Natural killer cell (primary cell): ENCODE measurements at regions of chr16 and their contacts with region 1.

Region 1: GRCh38 chr16:17026600-17027242 is 444.0 kb downstream of the XYLT1 start:
- DNase-seq: peak; percentile 47 to 64
- ATAC-seq: peak; percentile 67 to 88 (median 78)
- H3K4me3 ChIP-seq: no peak overlapping the region
- H3K4me3 Mint-ChIP-seq: peak overlapping the region; percentile 81
- H3K27ac ChIP-seq: peak overlapping the region; percentile 56
- H3K27ac Mint-ChIP-seq: peak overlapping the region; percentile 75 to 76
- H3K4me1 ChIP-seq: peaks cover 21% of the 10 kb centered on the region
- H3K4me1 Mint-ChIP-seq: peaks cover 41% of the 10 kb centered on the region in 2 donors
- H3K27me3 ChIP-seq: no peaks in the 10 kb centered on the region
- H3K27me3 Mint-ChIP-seq: peaks cover 0 to 17% of the 10 kb centered on the region in 2 donors
- CTCF ChIP-seq: no peak

Region 2: GRCh38 chr16:16982614-16983013 is 44.1 kb before region 1 on chr16:
- intact Hi-C with region 1: no loop called
- DNase-seq: no peak
- ATAC-seq: no peak
- H3K4me3 ChIP-seq: no peak overlapping the region
- H3K4me3 Mint-ChIP-seq: no peak overlapping the region
- H3K27ac ChIP-seq: no peak overlapping the region
- H3K27ac Mint-ChIP-seq: no peak overlapping the region
- H3K4me1 ChIP-seq: no peaks in the 10 kb centered on the region
- H3K4me1 Mint-ChIP-seq: peaks cover 18 to 23% of the 10 kb centered on the region in 2 donors
- H3K27me3 ChIP-seq: no peaks in the 10 kb centered on the region
- H3K27me3 Mint-ChIP-seq: no peaks in the 10 kb centered on the region
- CTCF ChIP-seq: no peak

Region 3: GRCh38 chr16:17013038-17013437 is 13.7 kb before region 1 on chr16:
- intact Hi-C with region 1: loop called (anchors 1 kb)
- DNase-seq: no peak
- ATAC-seq: no peak
- H3K4me3 ChIP-seq: no peak overlapping the region
- H3K4me3 Mint-ChIP-seq: peak overlapping the region; percentile 82
- H3K27ac ChIP-seq: peak overlapping the region; percentile 87
- H3K27ac Mint-ChIP-seq: peak overlapping the region; percentile 92 to 96
- H3K4me1 ChIP-seq: peaks cover 17% of the 10 kb centered on the region
- H3K4me1 Mint-ChIP-seq: peaks cover 11 to 16% of the 10 kb centered on the region in 2 donors
- H3K27me3 ChIP-seq: no peaks in the 10 kb centered on the region
- H3K27me3 Mint-ChIP-seq: no peaks in the 10 kb centered on the region
- CTCF ChIP-seq: no peak

Region 4: GRCh38 chr16:17070882-17071592 is 44.3 kb after region 1 on chr16:
- intact Hi-C with region 1: loop called (anchors 2 kb)
- DNase-seq: peak; percentile 57 to 96
- ATAC-seq: peak; percentile 71 to 92 (median 84)
- H3K4me3 ChIP-seq: peak overlapping the region; percentile 17
- H3K4me3 Mint-ChIP-seq: peak overlapping the region; percentile 88
- H3K27ac ChIP-seq: peak overlapping the region; percentile 50
- H3K27ac Mint-ChIP-seq: peak overlapping the region; percentile 78 to 96
- H3K4me1 ChIP-seq: peaks cover 14% of the 10 kb centered on the region
- H3K4me1 Mint-ChIP-seq: peaks cover 9 to 13% of the 10 kb centered on the region in 2 donors
- H3K27me3 ChIP-seq: no peaks in the 10 kb centered on the region
- H3K27me3 Mint-ChIP-seq: peaks cover 0 to 4% of the 10 kb centered on the region in 2 donors
- CTCF ChIP-seq: no peak

Region 5: DNA sequence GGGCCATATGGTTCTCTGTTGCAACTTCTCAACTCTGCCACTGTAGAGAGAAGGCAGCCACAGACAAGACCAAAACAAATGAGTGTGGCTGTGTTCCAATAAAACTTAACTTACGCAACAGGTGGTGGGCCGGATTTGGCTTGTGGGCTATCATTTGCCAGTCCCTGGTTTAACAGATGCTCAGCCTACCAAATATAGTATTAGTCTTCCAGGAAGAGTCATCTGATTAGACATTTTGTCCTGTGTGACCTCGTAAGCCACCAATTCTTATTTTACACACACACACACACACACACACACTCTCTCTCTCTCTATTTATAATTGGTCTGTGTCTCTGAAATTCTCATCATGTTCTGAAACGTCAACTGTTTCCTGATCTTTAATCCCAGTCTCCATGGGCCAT is 198.2 kb after region 1 on chr16:
- intact Hi-C with region 1: loop called (anchors 5 kb)
- DNase-seq: peak; percentile 63 to 66
- ATAC-seq: peak; percentile 83 to 92 (median 83)
- H3K4me3 ChIP-seq: no peak overlapping the region
- H3K4me3 Mint-ChIP-seq: peak overlapping the region; percentile 82
- H3K27ac ChIP-seq: peak overlapping the region; percentile 28
- H3K27ac Mint-ChIP-seq: peak overlapping the region; percentile 79 to 84
- H3K4me1 ChIP-seq: peaks cover 30% of the 10 kb centered on the region
- H3K4me1 Mint-ChIP-seq: peaks cover 38 to 50% of the 10 kb centered on the region in 2 donors
- H3K27me3 ChIP-seq: no peaks in the 10 kb centered on the region
- H3K27me3 Mint-ChIP-seq: no peaks in the 10 kb centered on the region
- CTCF ChIP-seq: no peak